HepG2 (cell line): ENCODE measurements at regions of chr15 and their contacts with region 1.

Region 1: GRCh38 chr15:35444557-35445204 is 101.3 kb downstream of the DPH6 start:
- DNase-seq: peak; percentile 37
- ATAC-seq: peak; percentile 34; the same call in 1 of the 3 replicates
- H3K4me3 ChIP-seq: no peak overlapping the region
- H3K27ac ChIP-seq: no peak overlapping the region
- H3K4me1 ChIP-seq: no peaks in the 10 kb centered on the region
- H3K27me3 ChIP-seq: no peaks in the 10 kb centered on the region
- CTCF ChIP-seq: peak; percentile 77
- EP300 ChIP-seq: no peak
- POLR2A ChIP-seq: no peak
- RAD21 ChIP-seq: peak; percentile 39; the same call in 1 of the 2 replicates

Region 2: DNA sequence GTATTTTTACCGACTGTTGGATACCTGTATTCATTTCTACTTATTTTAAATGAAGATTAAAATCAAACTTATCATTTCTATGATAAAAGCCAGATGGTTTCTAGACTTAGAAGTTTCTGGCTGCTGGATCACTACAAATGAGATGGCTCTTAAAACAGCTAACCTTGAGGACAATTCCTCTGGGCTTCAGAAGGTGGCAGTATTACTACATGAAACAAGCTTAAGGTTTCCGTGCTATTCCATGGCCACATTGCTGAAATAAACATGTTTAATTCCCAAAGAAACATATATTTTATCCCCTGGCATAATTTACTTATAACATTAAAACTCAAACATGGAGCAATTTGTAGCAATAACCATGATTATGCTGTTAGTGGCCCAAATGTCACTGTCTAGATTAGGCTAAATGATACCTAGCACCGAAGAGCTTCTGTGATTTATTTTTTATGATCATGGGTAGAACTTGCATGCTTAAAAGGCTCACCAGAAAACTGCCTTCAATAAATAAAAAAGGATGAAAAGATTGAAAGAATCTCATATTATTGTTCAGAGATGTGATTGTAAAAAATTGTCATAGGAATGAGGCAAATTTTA is 155.6 kb before region 1 on chr15:
- CTCF ChIA-PET with region 1: interaction called, 34 read pairs
- POLR2A ChIA-PET with region 1: interaction called, 4 read pairs
- in situ Hi-C with region 1: loop called (anchors 5 kb)
- intact Hi-C with region 1: loop called (anchors 1 kb)
- DNase-seq: peak; percentile 44
- ATAC-seq: peak; percentile 66
- H3K4me3 ChIP-seq: no peak overlapping the region
- H3K27ac ChIP-seq: no peak overlapping the region
- H3K4me1 ChIP-seq: peaks cover 12% of the 10 kb centered on the region
- H3K27me3 ChIP-seq: no peaks in the 10 kb centered on the region
- CTCF ChIP-seq: peak; percentile 75
- EP300 ChIP-seq: no peak
- POLR2A ChIP-seq: no peak
- RAD21 ChIP-seq: peak; percentile 46; the same call in 1 of the 2 replicates

Region 3: GRCh38 chr15:35618260-35619188 is 173.8 kb after region 1 on chr15:
- CTCF ChIA-PET with region 1: no interaction called
- POLR2A ChIA-PET with region 1: no interaction called
- in situ Hi-C with region 1: no loop called
- intact Hi-C with region 1: no loop called
- DNase-seq: no peak
- ATAC-seq: no peak
- H3K4me3 ChIP-seq: no peak overlapping the region
- H3K27ac ChIP-seq: no peak overlapping the region
- H3K4me1 ChIP-seq: no peaks in the 10 kb centered on the region
- H3K27me3 ChIP-seq: no peaks in the 10 kb centered on the region
- CTCF ChIP-seq: no peak
- EP300 ChIP-seq: no peak
- POLR2A ChIP-seq: no peak
- RAD21 ChIP-seq: no peak